HepG2 (cell line): ENCODE measurements at regions of chr14 and their contacts with region 1.

Region 1: DNA sequence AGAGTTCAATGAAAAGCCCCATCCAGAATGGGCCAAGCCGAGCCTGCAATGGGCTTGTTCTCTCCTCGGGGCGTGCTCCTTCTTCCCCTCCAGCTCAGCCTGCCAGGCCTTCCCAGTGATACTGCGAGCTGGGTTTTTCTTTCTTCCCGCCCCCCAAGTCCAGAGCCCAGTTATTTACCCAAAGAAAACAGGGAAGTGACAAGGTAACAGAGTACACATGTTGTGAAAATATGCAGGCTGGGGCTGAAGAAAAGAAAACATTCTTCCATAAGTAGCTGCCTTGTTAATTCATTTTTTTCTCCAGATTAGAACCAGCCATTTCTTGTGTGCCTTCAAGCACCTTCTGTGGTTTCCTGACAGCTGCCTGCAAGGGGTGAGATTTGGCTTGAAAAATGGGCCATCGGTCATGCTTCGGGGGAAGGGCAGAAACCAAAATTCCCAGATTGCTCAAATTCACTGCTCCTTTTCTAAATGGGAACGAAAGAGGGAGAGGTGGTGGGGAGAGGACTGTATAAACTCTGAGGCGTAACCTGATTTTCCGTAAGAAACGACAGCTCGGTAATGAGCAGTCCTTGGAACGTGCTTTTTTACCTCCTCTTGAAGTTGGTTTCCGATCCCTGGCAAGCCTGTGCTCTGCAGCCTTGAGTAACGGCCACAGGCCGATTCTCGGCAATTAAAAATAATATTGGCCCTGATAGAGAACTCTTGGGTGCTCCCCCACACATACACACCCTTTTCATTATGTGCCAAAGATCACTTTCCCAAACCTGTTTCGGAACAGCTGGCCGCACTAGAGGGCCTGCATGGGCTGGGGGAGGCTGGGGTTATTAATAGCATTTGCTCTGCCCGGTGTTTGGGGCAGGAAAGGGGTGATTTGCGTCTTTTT is 229.4 kb downstream of the ZFP36L1 start:
- DNase-seq: peak; percentile 61
- ATAC-seq: peak; percentile 42
- H3K4me3 ChIP-seq: peak overlapping the region in 1 of 3 experiments; percentile 19; a peak in 1 of 6 replicates
- H3K27ac ChIP-seq: peak overlapping the region; percentile 22
- H3K4me1 ChIP-seq: peaks cover 80% of the 10 kb centered on the region
- H3K27me3 ChIP-seq: no peaks in the 10 kb centered on the region
- CTCF ChIP-seq: no peak
- EP300 ChIP-seq: peak in 1 of 2 experiments; percentile 77; a peak in 2 of 4 replicates
- POLR2A ChIP-seq: peak in 1 of 2 experiments; percentile 29; a peak in 1 of 4 replicates
- RAD21 ChIP-seq: no peak

Region 2: DNA sequence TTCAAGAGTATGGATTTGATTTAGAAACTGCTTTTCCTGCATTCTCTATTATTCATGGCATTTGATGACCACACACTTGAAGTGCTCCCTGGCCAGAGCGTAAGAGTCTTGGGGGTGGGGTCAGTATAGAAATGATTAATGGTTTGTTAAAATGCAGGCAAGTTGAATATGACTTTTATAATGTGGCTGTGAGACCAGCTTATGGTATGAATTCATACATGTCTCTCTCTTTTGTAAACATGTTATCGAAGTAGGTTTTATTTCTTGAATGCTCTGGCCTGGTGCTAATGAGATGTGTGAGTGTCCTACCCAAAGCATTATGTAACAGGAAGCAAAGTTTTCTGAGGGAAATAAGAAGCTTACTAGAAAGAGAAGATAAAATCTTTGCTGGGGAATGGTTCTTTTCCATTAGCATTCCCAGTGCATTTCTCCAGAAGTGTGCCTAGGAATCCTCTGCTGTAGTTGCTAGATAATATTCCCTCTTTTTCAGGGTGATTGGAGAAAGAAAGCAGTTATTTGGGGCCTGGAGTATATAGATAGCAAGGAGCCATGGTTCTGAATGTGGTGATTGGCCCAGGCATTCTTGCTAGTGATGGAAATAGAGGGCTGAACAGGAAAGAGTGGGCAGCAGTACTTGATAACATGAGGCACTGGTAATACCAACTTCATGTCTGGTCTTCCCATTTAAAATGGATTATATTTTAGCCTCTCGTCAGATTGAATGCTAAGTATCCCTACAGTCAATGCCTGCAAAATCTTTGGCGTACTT is 454.2 kb before region 1 on chr14:
- CTCF ChIA-PET with region 1: no interaction called
- POLR2A ChIA-PET with region 1: no interaction called
- in situ Hi-C with region 1: no loop called
- intact Hi-C with region 1: loop called (anchors 5 kb)
- DNase-seq: no peak
- ATAC-seq: no peak
- H3K4me3 ChIP-seq: no peak overlapping the region
- H3K27ac ChIP-seq: no peak overlapping the region
- H3K4me1 ChIP-seq: peaks cover 13% of the 10 kb centered on the region
- H3K27me3 ChIP-seq: no peaks in the 10 kb centered on the region
- CTCF ChIP-seq: no peak
- EP300 ChIP-seq: no peak
- POLR2A ChIP-seq: no peak
- RAD21 ChIP-seq: no peak

Region 3: DNA sequence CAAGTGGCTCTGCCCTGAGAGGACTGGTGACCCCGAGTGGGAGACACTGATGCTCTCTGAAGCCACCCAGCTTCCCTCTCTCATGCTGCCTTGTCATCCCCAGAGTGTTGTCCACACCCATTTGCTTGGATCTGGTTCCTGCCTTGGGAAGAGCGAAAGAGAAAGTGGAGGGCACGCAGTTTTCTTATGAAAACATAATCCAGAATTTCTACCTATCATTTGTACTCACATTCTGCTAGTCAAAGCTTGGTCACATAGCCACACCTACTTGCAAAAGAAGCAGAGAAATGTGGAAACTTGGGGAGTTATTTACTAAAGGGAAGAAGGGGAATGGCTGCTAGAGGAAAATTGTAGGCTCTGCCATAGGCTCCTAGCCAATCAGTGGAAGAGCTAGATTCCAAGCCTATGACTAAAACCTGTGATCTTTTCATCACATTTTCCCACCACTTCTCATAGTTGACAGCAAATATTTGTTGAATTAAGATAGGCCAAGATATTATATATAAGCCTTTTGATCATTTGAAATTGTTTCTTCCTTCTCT is 96.9 kb before region 1 on chr14:
- CTCF ChIA-PET with region 1: no interaction called
- POLR2A ChIA-PET with region 1: no interaction called
- in situ Hi-C with region 1: no loop called
- intact Hi-C with region 1: loop called (anchors 10 kb)
- DNase-seq: peak; percentile 63
- ATAC-seq: no peak
- H3K4me3 ChIP-seq: no peak overlapping the region
- H3K27ac ChIP-seq: no peak overlapping the region
- H3K4me1 ChIP-seq: peaks cover 48% of the 10 kb centered on the region
- H3K27me3 ChIP-seq: no peaks in the 10 kb centered on the region
- CTCF ChIP-seq: no peak
- EP300 ChIP-seq: no peak
- POLR2A ChIP-seq: no peak
- RAD21 ChIP-seq: no peak

Region 4: DNA sequence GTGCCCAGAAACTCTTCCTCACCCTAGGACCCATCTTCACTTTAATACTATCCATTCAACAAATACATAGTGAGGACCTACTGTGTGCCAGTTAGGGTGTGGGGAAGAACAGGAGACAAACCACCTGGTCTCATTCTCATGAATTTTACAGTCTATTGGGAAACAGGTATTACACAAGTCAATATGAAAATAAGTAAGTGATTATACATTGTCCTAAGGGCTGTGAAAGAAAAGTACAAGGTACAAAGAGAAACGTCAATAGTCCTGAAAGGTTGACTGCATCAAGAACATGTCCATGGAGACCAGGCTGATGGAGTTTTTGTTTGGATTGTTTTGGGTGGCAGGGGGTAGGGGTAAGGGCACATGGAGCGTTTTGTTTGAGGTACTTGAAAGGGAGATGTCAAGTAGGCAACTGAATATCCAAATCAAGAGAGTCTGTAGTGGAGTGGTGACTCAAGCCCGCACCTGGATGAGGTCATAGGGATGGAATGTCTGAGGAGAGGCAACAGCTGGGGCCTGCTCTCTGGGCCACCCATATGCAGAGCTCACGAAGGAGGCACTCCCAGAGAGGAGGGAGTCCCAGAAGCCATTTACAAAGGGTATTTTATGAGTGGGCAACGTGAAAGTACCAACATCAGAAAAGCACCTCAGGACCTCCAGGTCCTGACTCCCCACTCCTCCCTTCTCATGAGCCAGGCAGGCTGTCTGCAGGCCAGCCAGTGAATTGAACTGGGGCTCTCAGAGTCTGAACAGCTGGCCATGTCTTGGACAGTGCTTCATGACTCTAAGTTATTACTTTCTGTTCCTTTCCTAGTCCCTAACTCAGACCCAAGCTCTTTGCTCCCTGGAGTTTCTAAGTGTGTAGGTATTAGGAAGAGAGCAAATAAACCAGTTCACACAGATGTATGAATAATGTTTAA is 42.6 kb before region 1 on chr14:
- CTCF ChIA-PET with region 1: no interaction called
- POLR2A ChIA-PET with region 1: interaction called, 10 read pairs
- in situ Hi-C with region 1: no loop called
- intact Hi-C with region 1: no loop called
- DNase-seq: peak; percentile 86
- ATAC-seq: peak; percentile 75
- H3K4me3 ChIP-seq: peak overlapping the region in 2 of 3 experiments; percentile 47 to 67; a peak in 4 of 6 replicates
- H3K27ac ChIP-seq: peak overlapping the region; percentile 84
- H3K4me1 ChIP-seq: peaks cover 69% of the 10 kb centered on the region
- H3K27me3 ChIP-seq: no peaks in the 10 kb centered on the region
- CTCF ChIP-seq: no peak
- EP300 ChIP-seq: peak in 1 of 2 experiments; percentile 47; a peak in 1 of 4 replicates
- POLR2A ChIP-seq: no peak; a peak in 1 of 4 replicates
- RAD21 ChIP-seq: no peak

Region 5: DNA sequence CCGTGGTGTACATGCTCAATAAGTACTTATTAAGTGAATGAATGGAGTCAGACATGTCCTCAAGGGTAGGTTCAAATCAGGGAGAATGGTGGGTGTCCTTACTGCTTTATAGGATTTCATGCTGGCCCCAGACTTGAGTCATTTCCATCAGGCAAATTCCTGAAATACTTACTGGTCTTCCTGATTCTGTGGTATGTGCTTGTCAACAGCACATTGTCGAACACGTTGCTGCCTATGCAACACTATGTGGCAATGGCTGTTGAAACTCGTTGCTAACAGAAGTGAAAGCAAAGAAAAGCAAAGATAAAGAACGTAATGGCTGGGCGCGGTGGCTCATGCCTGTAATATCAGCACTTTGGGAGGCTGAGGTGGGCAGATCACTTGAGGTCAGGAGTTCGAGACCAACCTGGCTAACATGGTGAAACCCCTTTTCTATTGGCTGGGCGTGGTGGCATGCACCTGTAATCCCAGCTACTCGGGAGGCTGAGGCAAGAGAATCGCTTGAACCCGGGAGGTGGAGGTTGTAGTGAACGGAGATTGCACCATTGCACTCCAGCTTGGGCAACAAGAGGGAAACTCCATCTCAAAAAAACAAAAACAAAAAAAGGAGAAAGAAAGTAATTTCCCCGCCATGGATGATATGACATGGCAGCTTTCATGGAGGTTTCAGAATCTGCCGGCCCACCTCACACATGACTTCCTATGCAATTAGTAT is 14.5 kb after region 1 on chr14:
- CTCF ChIA-PET with region 1: no interaction called
- POLR2A ChIA-PET with region 1: interaction called, 6 read pairs
- in situ Hi-C with region 1: no loop called
- intact Hi-C with region 1: loop called (anchors 2 kb)
- DNase-seq: peak; percentile 97
- ATAC-seq: peak; percentile 93
- H3K4me3 ChIP-seq: no peak overlapping the region; a peak in 1 of 6 replicates
- H3K27ac ChIP-seq: peak overlapping the region; percentile 21
- H3K4me1 ChIP-seq: peaks cover 38% of the 10 kb centered on the region
- H3K27me3 ChIP-seq: no peaks in the 10 kb centered on the region
- CTCF ChIP-seq: no peak
- EP300 ChIP-seq: peak; percentile 82 to 83
- POLR2A ChIP-seq: no peak
- RAD21 ChIP-seq: no peak